CD4-positive, alpha-beta memory T cell (primary cell): ENCODE measurements at regions of chr2 and their contacts with region 1.

Region 1: GRCh38 chr2:75676464-75676863 is 29.9 kb downstream of the MRPL19 start:
- DNase-seq: no peak
- H3K4me3 ChIP-seq: no peak overlapping the region
- H3K4me3 Mint-ChIP-seq: no peak overlapping the region
- H3K27ac ChIP-seq: no peak overlapping the region
- H3K27ac Mint-ChIP-seq: no peak overlapping the region
- H3K4me1 ChIP-seq: no peaks in the 10 kb centered on the region
- H3K4me1 Mint-ChIP-seq: peaks cover 0 to 11% (median 5%) of the 10 kb centered on the region in 4 donors
- H3K27me3 ChIP-seq: no peaks in the 10 kb centered on the region
- H3K27me3 Mint-ChIP-seq: no peaks in the 10 kb centered on the region

Region 2: DNA sequence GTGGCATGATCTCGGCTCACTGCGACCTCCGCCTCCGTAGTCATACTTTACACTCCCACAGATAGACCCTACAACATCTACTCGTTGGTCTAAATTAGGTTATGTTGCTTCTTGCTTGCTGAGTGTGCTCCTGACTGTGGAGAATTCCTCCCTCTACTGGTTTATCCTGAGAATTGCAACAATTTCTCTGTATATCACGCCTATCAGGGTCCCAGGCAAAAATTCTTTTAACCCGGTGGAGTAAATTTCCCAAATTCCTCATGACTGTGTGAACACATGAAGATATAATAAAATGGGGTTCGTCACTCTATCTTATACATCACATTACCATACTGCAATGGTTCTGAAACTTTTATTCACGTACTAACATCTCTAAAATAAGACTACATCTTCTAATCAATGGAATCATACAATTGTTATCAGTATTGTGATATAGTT is 272.5 kb before region 1 on chr2:
- CTCF ChIA-PET with region 1: no interaction called
- POLR2A ChIA-PET with region 1: no interaction called
- intact Hi-C with region 1: no loop called
- DNase-seq: peak in 4 of 5 donors; percentile 31 to 37 (median 35)
- H3K4me3 ChIP-seq: no peak overlapping the region
- H3K4me3 Mint-ChIP-seq: no peak overlapping the region
- H3K27ac ChIP-seq: no peak overlapping the region
- H3K27ac Mint-ChIP-seq: no peak overlapping the region
- H3K4me1 ChIP-seq: no peaks in the 10 kb centered on the region
- H3K4me1 Mint-ChIP-seq: no peaks in the 10 kb centered on the region
- H3K27me3 ChIP-seq: peaks cover 6% of the 10 kb centered on the region
- H3K27me3 Mint-ChIP-seq: peaks cover 19 to 20% of the 10 kb centered on the region in 2 donors

Region 3: DNA sequence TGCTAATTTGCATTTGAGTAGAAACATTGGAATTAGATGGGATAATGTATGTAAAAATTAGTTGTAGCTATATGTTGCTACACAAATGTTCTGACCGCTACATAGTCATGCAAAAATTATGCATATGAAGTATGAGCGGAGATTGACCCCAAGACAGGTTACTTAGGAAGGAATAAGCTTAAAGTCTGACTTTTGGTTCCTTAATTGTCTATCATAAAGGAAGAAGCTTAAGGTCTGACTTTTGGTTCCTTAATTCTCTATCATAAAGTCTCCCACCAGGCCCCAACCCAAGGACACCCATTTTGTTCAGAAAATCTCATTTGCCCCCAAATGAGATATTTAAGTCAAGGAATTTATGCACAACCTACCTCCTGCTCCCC is 222.2 kb before region 1 on chr2:
- CTCF ChIA-PET with region 1: no interaction called
- POLR2A ChIA-PET with region 1: no interaction called
- intact Hi-C with region 1: no loop called
- DNase-seq: no peak
- H3K4me3 ChIP-seq: no peak overlapping the region
- H3K4me3 Mint-ChIP-seq: no peak overlapping the region
- H3K27ac ChIP-seq: no peak overlapping the region
- H3K27ac Mint-ChIP-seq: no peak overlapping the region
- H3K4me1 ChIP-seq: no peaks in the 10 kb centered on the region
- H3K4me1 Mint-ChIP-seq: no peaks in the 10 kb centered on the region
- H3K27me3 ChIP-seq: no peaks in the 10 kb centered on the region
- H3K27me3 Mint-ChIP-seq: peaks cover 0 to 2% of the 10 kb centered on the region in 2 donors

Region 4: DNA sequence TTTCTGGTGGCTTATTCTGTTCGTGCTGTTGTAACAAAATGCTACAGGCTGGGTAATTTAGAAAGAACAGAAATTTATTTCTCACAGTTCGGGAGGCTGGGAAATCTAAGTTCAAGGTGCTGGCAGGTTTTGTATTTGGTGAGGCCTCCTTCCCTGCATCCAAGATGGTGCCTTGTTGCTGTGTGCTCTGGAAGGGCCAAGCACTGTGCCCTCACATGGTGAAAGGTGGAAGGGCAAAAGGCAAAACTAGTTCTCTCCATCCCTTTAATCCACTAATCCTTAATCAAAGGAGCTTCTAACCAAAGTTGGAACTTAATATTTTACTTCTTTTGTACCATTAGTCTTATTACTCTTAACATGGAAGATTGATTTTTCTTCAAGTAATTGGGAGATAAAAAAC is 22.5 kb before region 1 on chr2:
- CTCF ChIA-PET with region 1: interaction called, 10 read pairs
- POLR2A ChIA-PET with region 1: no interaction called
- intact Hi-C with region 1: no loop called
- DNase-seq: no peak
- H3K4me3 ChIP-seq: no peak overlapping the region
- H3K4me3 Mint-ChIP-seq: no peak overlapping the region
- H3K27ac ChIP-seq: no peak overlapping the region
- H3K27ac Mint-ChIP-seq: no peak overlapping the region
- H3K4me1 ChIP-seq: no peaks in the 10 kb centered on the region
- H3K4me1 Mint-ChIP-seq: peaks cover 21 to 35% (median 23%) of the 10 kb centered on the region in 4 donors
- H3K27me3 ChIP-seq: no peaks in the 10 kb centered on the region
- H3K27me3 Mint-ChIP-seq: no peaks in the 10 kb centered on the region

Region 5: GRCh38 chr2:75688196-75688595 is 11.7 kb after region 1 on chr2:
- CTCF ChIA-PET with region 1: interaction called, 21 read pairs
- POLR2A ChIA-PET with region 1: no interaction called
- intact Hi-C with region 1: no loop called
- DNase-seq: no peak
- H3K4me3 ChIP-seq: no peak overlapping the region
- H3K4me3 Mint-ChIP-seq: no peak overlapping the region
- H3K27ac ChIP-seq: no peak overlapping the region
- H3K27ac Mint-ChIP-seq: no peak overlapping the region
- H3K4me1 ChIP-seq: no peaks in the 10 kb centered on the region
- H3K4me1 Mint-ChIP-seq: peaks cover 9 to 16% (median 12%) of the 10 kb centered on the region in 4 donors
- H3K27me3 ChIP-seq: no peaks in the 10 kb centered on the region
- H3K27me3 Mint-ChIP-seq: no peaks in the 10 kb centered on the region